ENCODE measurements at regions of chr4 and their contacts with region 1.

Region 1: GRCh38 chr4:5895287-5895686 is 2.4 kb upstream of the CRMP1 start:
- DNase-seq: no peak
- H3K4me3 ChIP-seq: no peak overlapping the region
- H3K27ac ChIP-seq: no peak overlapping the region
- H3K4me1 ChIP-seq: no peaks in the 10 kb centered on the region
- H3K27me3 ChIP-seq: peaks cover 26 to 30% of the 10 kb centered on the region in 2 experiments
- CTCF ChIP-seq: no peak
- POLR2A ChIP-seq: no peak

Region 2: DNA sequence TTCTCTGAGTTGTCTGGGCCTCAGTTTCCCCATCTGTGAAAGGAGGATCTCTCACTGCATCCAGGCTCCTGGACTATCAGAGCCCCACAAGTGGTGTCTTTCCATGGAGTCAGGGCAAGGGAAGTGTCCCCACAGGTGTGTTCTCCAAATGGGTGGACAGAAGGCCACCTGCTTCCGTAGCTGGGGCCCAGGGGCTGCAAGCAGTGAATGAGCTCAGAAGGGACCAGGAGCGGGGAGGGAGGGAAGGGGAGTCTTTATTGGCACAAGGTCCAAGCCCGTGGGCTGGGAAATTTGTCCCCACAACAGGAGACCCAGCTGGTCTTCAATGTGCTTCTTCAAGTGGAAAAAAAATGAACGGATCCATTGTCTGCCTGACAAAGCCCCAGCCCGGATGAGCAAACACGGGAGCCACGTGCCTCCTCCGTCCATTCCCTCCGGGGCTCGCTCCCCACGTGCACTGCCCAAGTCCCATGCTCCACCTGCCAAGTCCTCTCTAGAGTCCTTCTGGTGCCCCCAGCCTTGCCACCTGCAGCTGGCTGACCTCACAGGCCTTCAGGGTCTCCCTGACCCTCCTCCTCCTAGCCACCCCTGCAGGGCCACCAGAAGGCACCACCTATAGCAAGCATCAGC is 233.0 kb after region 1 on chr4:
- CTCF ChIA-PET with region 1: no interaction called
- POLR2A ChIA-PET with region 1: no interaction called
- dilution Hi-C with region 1: no loop called
- intact Hi-C with region 1: no loop called
- DNase-seq: no peak
- H3K4me3 ChIP-seq: no peak overlapping the region
- H3K27ac ChIP-seq: no peak overlapping the region
- H3K4me1 ChIP-seq: no peaks in the 10 kb centered on the region
- H3K27me3 ChIP-seq: no peaks in the 10 kb centered on the region
- CTCF ChIP-seq: no peak
- POLR2A ChIP-seq: no peak

Region 3: DNA sequence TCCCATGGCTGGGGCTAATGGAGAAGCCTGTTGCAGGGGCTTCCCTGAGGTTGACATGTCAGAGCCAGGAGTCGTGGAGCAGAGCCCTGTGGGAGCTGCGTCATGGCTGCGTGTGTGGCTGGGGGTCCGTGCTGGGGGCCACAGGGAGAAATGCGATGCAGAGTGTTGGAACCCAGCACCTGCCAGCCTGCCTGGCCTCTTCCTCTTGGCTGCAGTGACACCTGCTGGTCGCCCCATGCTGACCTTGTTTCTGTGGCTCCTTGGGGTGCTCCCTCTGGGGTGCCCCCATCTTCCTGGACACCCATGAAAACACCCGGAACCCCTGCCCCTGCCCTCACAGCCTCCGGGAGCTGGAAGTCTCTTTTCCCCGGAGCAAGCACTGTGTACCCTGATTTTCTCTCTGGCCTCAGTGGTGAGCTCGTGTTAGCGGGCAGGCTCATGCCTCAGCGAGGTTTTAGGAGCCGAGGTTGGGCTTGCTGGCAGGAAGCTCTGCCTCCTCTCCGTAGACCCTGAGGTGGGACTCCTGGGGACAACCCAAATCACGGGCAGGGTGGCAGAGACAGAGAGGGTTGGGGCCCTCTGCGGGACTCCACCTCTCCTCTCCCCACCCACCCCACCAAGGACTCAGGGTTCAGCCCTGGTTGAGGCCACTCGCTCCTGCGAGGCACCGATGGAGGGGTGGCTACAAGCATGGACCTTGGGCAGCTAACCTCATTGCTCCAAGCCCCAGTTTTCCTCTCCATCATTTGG is 1400.8 kb after region 1 on chr4:
- CTCF ChIA-PET with region 1: no interaction called
- POLR2A ChIA-PET with region 1: no interaction called
- dilution Hi-C with region 1: no loop called
- intact Hi-C with region 1: loop called (anchors 5 kb)
- DNase-seq: no peak
- H3K4me3 ChIP-seq: no peak overlapping the region
- H3K27ac ChIP-seq: no peak overlapping the region
- H3K4me1 ChIP-seq: no peaks in the 10 kb centered on the region
- H3K27me3 ChIP-seq: no peaks in the 10 kb centered on the region
- CTCF ChIP-seq: peak; percentile 21 to 29
- POLR2A ChIP-seq: no peak